ENCODE measurements at regions of chr11 and their contacts with region 1.

Region 1: DNA sequence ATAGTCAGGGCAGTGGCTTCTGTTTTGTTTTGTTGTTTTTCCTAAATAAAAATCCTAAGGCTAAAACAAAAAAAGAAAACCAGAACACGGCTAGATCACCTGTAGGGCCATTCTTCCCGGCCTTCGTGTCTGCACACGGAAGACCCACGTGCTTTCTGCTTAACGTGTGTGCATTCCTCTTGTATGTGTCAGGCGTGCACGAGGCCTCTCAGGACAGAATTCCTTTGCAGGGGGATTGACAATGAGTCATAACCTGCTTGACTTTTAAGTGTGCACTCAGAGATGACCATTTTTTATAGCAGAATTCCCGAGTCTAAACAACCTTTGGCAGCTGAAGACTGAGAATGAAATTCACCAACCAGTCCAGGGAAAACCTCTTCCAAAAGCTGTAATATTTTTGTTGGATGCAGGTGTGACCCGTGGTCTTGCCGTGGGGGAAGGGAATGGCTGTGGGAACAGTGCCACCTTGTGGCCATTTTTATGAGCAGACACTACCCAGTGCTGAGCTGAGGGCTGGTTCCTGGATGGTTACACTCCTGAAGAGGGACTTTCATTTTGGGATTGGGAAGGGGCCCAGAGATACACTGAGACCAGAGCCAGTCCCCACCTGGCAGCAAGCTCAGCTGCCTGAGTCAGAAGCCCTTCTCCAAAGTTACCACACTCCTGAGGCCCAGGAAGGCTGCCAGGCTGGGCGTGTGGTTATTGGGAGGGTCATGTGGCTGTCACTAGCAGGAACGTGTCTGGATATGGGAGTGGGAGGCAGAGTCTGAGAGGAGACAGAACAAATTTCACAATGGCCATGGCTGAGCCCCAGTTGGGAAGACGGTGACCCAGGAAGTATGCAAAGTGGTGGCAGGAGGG is 35.8 kb upstream of the DKK3 start:
- DNase-seq: peak; percentile 84 to 95
- H3K4me3 ChIP-seq: peak overlapping the region in 1 of 2 donors; percentile 6
- H3K27ac ChIP-seq: peak overlapping the region; percentile 75
- H3K4me1 ChIP-seq: peaks cover 0 to 13% of the 10 kb centered on the region in 2 donors
- H3K27me3 ChIP-seq: no peaks in the 10 kb centered on the region
- CTCF ChIP-seq: peak; percentile 84 to 94 (median 89)

Region 2: GRCh38 chr11:11931461-11932055 is 112.6 kb before region 1 on chr11:
- intact Hi-C with region 1: loop called (anchors 1 kb)
- DNase-seq: no peak
- H3K4me3 ChIP-seq: no peak overlapping the region
- H3K27ac ChIP-seq: no peak overlapping the region
- H3K4me1 ChIP-seq: no peaks in the 10 kb centered on the region
- H3K27me3 ChIP-seq: no peaks in the 10 kb centered on the region
- CTCF ChIP-seq: peak; percentile 69 to 74 (median 71)

Region 3: DNA sequence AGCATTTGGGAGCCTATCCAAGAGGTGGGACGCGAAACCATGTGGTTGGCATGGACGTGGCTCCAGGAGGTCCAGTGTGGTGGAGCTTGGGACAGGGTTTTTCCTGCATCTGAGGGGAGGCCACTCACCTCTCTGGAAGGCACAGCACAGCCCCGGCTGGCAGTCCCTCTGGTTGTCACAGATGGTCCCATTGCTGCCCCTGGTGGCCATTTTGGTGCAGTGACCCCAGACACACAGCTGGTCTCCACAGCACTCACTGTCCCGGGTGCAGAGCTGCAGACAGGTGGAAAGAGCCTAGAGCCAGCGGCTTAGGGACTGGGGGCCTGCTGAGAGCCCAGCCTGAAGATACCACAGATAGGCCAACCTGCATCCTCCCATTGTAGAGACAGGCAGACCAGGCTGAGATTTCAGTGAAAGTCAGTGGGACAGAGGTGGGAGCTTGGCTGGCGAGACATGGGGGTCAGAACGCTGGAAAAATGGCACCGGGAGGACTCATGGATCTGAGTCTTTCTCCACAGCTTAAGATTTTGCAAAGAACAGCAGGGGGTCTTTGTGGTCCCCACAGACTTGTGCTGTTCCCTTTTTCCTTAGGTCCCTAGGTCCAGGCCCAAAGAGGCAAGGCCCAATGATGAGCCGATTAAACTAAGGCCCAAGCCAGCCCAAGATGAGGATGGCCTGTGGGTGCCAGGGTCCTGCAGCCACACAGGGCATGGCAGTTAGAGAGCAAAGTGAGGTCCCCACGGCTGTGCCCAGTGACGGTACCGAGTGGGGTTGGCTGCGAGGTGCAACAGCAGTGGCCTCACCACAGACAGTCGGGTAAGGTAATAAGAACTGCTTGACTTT is 77.1 kb before region 1 on chr11:
- intact Hi-C with region 1: no loop called
- DNase-seq: peak in 1 of 2 donors; percentile 87
- H3K4me3 ChIP-seq: no peak overlapping the region
- H3K27ac ChIP-seq: no peak overlapping the region
- H3K4me1 ChIP-seq: peaks cover 2 to 31% of the 10 kb centered on the region in 2 donors
- H3K27me3 ChIP-seq: no peaks in the 10 kb centered on the region
- CTCF ChIP-seq: peak; percentile 66 to 78 (median 67)

Region 4: DNA sequence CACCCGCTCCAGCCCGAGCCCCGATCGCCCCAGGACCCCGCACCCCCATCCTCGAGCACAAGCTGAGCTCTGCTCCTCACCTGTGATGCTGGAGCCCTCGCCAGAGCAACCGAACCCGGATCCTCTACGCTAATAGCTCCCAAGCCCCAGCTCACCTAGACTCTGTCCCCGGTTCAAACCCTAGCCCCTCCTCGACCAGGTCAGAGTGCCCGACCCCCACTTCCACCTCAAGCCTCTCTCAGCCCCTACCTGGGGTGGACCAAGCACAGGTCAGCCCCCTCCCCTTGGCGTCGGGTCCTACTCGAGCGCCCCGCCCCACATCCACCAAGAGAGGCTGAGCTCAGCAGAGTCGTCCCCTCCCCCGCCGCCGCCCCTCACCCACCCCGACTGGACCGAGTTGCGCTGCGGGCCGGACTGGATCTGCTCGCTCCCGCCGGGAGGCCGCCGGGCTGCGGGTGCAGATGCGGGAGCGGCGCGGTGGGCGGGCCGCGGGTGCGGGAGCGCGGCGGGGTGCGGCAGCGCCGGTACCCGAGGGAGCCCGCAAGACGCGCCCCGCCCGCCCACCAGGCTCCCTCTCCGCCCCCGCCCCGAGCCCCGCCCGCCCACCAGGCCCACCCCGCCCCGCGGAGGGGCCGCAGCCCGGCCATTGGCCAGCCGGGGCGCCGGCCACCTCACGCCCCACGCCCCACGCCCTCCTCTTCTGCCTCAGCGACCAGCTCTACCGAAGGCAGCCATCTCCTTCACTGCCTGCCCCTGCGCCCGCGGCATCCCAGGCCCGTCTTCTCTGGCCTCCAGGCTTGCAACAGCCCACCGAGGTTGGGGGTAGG is 35.2 kb before region 1 on chr11:
- intact Hi-C with region 1: loop called (anchors 2 kb)
- DNase-seq: peak in 1 of 2 donors; percentile 80
- H3K4me3 ChIP-seq: peak overlapping the region; percentile 74 to 82
- H3K27ac ChIP-seq: peak overlapping the region; percentile 86 to 88
- H3K4me1 ChIP-seq: peaks cover 3 to 30% of the 10 kb centered on the region in 2 donors
- H3K27me3 ChIP-seq: no peaks in the 10 kb centered on the region
- CTCF ChIP-seq: no peak

Region 5: GRCh38 chr11:12087075-12088004 is 43.2 kb after region 1 on chr11:
- intact Hi-C with region 1: loop called (anchors 2 kb)
- DNase-seq: peak in 1 of 2 donors; percentile 82
- H3K4me3 ChIP-seq: peak overlapping the region; percentile 46 to 69
- H3K27ac ChIP-seq: peak overlapping the region; percentile 98 to 99
- H3K4me1 ChIP-seq: peaks cover 24 to 59% of the 10 kb centered on the region in 2 donors
- H3K27me3 ChIP-seq: no peaks in the 10 kb centered on the region
- CTCF ChIP-seq: peak; percentile 20 to 35 (median 27)

Region 6: GRCh38 chr11:12139144-12139881 is 95.1 kb after region 1 on chr11:
- intact Hi-C with region 1: no loop called
- DNase-seq: no peak
- H3K4me3 ChIP-seq: peak overlapping the region in 1 of 2 donors; percentile 0
- H3K27ac ChIP-seq: peak overlapping the region; percentile 88 to 89
- H3K4me1 ChIP-seq: peaks cover 44 to 89% of the 10 kb centered on the region in 2 donors
- H3K27me3 ChIP-seq: no peaks in the 10 kb centered on the region
- CTCF ChIP-seq: no peak

Region 7: GRCh38 chr11:12281571-12282478 is 237.6 kb after region 1 on chr11:
- intact Hi-C with region 1: loop called (anchors 1 kb)
- DNase-seq: peak in 1 of 2 donors; percentile 94
- H3K4me3 ChIP-seq: no peak overlapping the region
- H3K27ac ChIP-seq: peak overlapping the region; percentile 9 to 55
- H3K4me1 ChIP-seq: peaks cover 6 to 34% of the 10 kb centered on the region in 2 donors
- H3K27me3 ChIP-seq: no peaks in the 10 kb centered on the region
- CTCF ChIP-seq: peak; percentile 94 to 97 (median 97)

Measured in ascending aorta (tissue), 2 donors.